HepG2 (cell line): ENCODE measurements at regions of chr20 and their contacts with region 1.

Region 1: DNA sequence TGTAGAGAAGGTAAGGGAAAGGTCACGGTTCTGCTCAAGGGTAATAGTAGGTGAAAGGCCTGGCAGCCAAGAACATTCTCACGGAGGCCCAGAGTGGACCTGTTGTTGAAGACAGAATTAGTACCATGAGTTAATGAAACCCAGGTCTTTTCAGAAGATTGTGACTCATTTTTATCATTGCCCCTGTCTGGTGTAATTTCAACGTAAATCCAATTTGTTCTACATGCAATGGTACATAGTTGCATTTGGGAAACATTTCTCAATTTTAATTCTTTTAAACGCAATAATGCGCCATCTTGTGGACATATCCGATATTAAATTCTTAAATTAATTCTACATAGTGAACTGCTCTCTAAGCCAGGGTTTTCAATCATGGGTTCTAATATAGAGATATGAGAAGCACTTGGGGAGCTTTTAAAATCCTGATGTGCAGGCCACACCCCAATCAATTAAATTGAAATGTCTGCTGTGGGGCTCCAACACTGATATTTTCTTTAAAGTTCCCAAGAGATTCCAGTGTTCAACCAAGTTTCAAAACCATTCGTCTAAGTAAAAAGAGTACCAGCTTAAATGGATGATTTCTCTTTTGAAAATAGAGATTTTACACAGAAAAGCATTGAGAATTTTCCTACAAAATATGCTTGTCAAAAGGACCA is 257.4 kb downstream of the PLCB1 start:
- DNase-seq: peak; percentile 55
- ATAC-seq: peak; percentile 42
- H3K4me3 ChIP-seq: no peak overlapping the region
- H3K27ac ChIP-seq: no peak overlapping the region
- H3K4me1 ChIP-seq: peaks cover 49% of the 10 kb centered on the region
- H3K27me3 ChIP-seq: no peaks in the 10 kb centered on the region
- CTCF ChIP-seq: peak; percentile 64
- EP300 ChIP-seq: no peak
- POLR2A ChIP-seq: no peak
- RAD21 ChIP-seq: peak; percentile 65

Region 2: GRCh38 chr20:8043687-8044282 is 345.7 kb before region 1 on chr20:
- CTCF ChIA-PET with region 1: interaction called, 8 read pairs
- POLR2A ChIA-PET with region 1: no interaction called
- in situ Hi-C with region 1: no loop called
- intact Hi-C with region 1: loop called (anchors 2 kb)
- DNase-seq: peak; percentile 81
- ATAC-seq: peak; percentile 88
- H3K4me3 ChIP-seq: no peak overlapping the region
- H3K27ac ChIP-seq: no peak overlapping the region
- H3K4me1 ChIP-seq: peaks cover 26% of the 10 kb centered on the region; the same call in 1 of the 2 replicates
- H3K27me3 ChIP-seq: 0 out of 5 replicates have a peak, but pooled peaks cover 0 to 4% of the 10 kb centered on the region in 2 experiments
- CTCF ChIP-seq: peak; percentile 86
- EP300 ChIP-seq: no peak
- POLR2A ChIP-seq: no peak
- RAD21 ChIP-seq: peak; percentile 70

Region 3: GRCh38 chr20:8255945-8256632 is 133.4 kb before region 1 on chr20:
- CTCF ChIA-PET with region 1: no interaction called
- POLR2A ChIA-PET with region 1: no interaction called
- in situ Hi-C with region 1: no loop called
- intact Hi-C with region 1: loop called (anchors 5 kb)
- DNase-seq: peak; percentile 84
- ATAC-seq: peak; percentile 81
- H3K4me3 ChIP-seq: no peak overlapping the region
- H3K27ac ChIP-seq: peak overlapping the region; percentile 17
- H3K4me1 ChIP-seq: peaks cover 42% of the 10 kb centered on the region
- H3K27me3 ChIP-seq: no peaks in the 10 kb centered on the region
- CTCF ChIP-seq: no peak
- EP300 ChIP-seq: peak in 1 of 2 experiments; percentile 31; a peak in 1 of 4 replicates
- POLR2A ChIP-seq: no peak
- RAD21 ChIP-seq: no peak

Region 4: DNA sequence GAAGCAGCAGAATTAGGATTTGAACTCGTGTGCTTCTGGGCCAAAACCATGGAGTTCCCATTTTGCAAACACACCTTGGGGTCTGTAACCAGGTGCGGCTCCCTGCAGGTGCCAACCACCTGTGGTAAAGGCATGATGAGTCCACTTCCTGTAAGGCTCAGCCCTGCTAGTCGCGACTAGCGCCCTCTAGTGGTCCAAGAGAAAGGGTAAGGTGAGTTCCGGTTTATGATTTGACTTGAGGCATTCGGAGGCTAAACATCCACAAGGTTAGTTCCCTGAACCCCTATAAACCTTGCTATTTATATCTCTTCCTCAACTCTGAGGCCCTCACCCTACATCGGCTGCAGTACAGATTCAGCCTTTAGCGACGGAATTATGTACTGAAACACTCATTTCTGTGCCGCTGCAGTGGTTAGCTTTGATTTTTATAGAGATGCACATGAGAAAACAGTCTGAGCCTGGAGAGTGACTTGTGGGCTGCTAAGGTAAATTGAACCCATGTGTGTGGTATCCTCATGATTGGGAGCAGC is 84.0 kb before region 1 on chr20:
- CTCF ChIA-PET with region 1: interaction called, 14 read pairs
- POLR2A ChIA-PET with region 1: no interaction called
- in situ Hi-C with region 1: no loop called
- intact Hi-C with region 1: loop called (anchors 5 kb)
- DNase-seq: peak; percentile 83
- ATAC-seq: peak; percentile 97
- H3K4me3 ChIP-seq: no peak overlapping the region
- H3K27ac ChIP-seq: no peak overlapping the region
- H3K4me1 ChIP-seq: no peaks in the 10 kb centered on the region
- H3K27me3 ChIP-seq: no peaks in the 10 kb centered on the region
- CTCF ChIP-seq: peak; percentile 87
- EP300 ChIP-seq: no peak
- POLR2A ChIP-seq: no peak
- RAD21 ChIP-seq: peak; percentile 87

Region 5: DNA sequence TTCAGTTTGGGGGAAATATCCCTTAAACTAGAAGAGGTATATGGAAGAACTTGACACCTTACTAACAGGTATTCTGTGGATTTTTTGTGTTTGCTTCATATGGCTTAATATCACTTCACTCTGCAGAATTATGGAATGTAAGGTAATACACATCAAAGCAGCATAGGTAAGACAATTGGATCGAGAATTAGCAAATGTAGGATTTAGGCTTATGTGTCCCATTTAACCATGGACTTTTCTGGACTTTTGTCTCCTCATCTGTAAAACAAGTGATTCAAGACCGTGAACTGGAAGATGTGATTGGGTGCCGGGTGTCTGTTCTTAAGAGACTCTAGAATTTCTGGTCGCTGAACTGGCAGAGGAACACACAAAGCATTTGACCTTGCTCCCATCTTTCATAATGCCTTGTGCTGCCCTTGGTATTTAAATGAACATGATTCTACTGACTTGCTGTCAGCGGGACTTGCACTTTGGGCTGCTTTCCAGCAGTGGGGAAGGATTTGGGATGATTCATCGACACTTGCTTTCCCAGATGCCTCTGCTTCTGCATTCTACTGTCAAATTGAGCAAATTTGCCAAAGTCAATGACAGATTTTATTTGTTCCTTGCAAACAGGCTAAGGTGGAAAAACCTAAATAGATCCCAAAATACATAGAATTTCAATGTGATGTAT is 57.6 kb before region 1 on chr20:
- CTCF ChIA-PET with region 1: no interaction called
- POLR2A ChIA-PET with region 1: no interaction called
- in situ Hi-C with region 1: no loop called
- intact Hi-C with region 1: loop called (anchors 2 kb)
- DNase-seq: peak; percentile 86
- ATAC-seq: peak; percentile 60
- H3K4me3 ChIP-seq: peak overlapping the region in 2 of 3 experiments; percentile 1 to 44; a peak in 2 of 6 replicates
- H3K27ac ChIP-seq: peak overlapping the region; percentile 77
- H3K4me1 ChIP-seq: peaks cover 78% of the 10 kb centered on the region
- H3K27me3 ChIP-seq: no peaks in the 10 kb centered on the region
- CTCF ChIP-seq: no peak
- EP300 ChIP-seq: peak in 1 of 2 experiments; percentile 58; a peak in 2 of 4 replicates
- POLR2A ChIP-seq: no peak
- RAD21 ChIP-seq: peak; percentile 28; the same call in 1 of the 2 replicates

Region 6: GRCh38 chr20:8414586-8415274 is 25.2 kb after region 1 on chr20:
- CTCF ChIA-PET with region 1: no interaction called
- POLR2A ChIA-PET with region 1: no interaction called
- in situ Hi-C with region 1: no loop called
- intact Hi-C with region 1: loop called (anchors 2 kb)
- DNase-seq: peak; percentile 81
- ATAC-seq: peak; percentile 89
- H3K4me3 ChIP-seq: no peak overlapping the region
- H3K27ac ChIP-seq: peak overlapping the region; percentile 3
- H3K4me1 ChIP-seq: peaks cover 20% of the 10 kb centered on the region
- H3K27me3 ChIP-seq: no peaks in the 10 kb centered on the region
- CTCF ChIP-seq: no peak
- EP300 ChIP-seq: peak in 1 of 2 experiments; percentile 63; a peak in 1 of 4 replicates
- POLR2A ChIP-seq: no peak
- RAD21 ChIP-seq: no peak

Region 7: DNA sequence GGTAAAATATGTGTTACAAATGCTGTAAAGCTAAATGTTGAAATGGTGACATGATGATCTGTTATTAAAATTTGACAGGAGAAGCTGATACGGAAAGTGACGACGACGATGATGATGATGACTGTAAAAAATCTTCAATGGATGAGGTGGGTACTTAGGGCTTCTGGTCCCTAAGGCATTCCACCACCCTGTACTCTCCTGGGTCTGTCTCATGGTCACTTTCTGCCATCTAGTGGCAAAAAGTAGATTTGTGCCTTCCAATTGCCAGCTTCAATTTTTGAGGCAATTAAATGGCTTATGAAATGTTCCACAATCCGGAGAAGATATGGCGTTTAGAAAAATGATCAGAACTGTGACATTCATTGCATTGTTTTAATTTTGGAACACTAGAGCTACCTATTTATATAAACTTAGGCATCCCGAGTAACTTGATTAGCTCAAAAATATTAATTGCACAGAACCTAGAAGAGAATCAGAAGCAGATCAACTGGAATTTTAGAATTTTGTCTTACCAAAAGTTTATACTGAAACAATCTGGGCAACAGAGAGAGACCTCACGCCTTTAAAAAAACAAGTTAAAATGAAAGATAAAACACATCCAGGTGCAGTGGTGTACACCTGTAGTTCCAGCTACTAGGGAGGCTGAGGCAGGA is 332.9 kb after region 1 on chr20:
- CTCF ChIA-PET with region 1: no interaction called
- POLR2A ChIA-PET with region 1: no interaction called
- in situ Hi-C with region 1: no loop called
- intact Hi-C with region 1: loop called (anchors 5 kb)
- DNase-seq: peak; percentile 83
- ATAC-seq: peak; percentile 98
- H3K4me3 ChIP-seq: no peak overlapping the region
- H3K27ac ChIP-seq: no peak overlapping the region
- H3K4me1 ChIP-seq: no peaks in the 10 kb centered on the region
- H3K27me3 ChIP-seq: no peaks in the 10 kb centered on the region
- CTCF ChIP-seq: peak; percentile 94
- EP300 ChIP-seq: no peak
- POLR2A ChIP-seq: no peak
- RAD21 ChIP-seq: peak; percentile 89